ENCODE measurements at regions of chr4 and their contacts with region 1.

Region 1: DNA sequence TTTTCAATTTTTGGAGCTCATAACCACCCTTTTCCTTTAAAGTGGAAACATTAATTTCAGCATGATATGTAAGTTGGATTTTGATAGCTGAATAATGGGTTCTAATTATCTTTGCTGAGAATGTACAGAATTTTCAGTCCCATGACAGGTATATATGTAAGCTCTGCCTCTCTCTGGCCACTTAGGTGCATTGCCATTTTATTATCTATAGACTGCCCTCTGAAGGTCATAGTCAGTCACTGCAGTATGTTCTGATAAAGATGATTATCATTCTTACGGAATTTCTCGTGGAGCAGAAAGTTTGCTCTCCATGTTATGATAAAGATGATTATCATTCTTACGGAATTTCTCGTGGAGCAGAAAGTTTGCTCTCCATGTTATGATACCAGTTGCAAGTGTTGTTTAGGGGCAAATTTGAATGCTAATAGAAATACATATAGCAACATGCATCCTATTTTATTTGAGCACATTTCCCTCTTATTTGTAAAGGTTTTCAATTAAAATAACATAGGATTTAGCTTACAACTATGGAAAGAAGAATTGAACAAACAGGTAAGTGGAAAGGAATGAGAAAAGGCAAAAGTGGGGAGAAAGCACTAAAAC is 10.4 kb downstream of the AFP start:
- DNase-seq: peak; percentile 40
- H3K4me3 ChIP-seq: no peak overlapping the region
- H3K27ac ChIP-seq: no peak overlapping the region
- H3K4me1 ChIP-seq: no peaks in the 10 kb centered on the region
- H3K27me3 ChIP-seq: peaks cover 12 to 42% of the 10 kb centered on the region in 2 experiments
- CTCF ChIP-seq: peak; percentile 53 to 59
- POLR2A ChIP-seq: no peak

Region 2: GRCh38 chr4:73036123-73036522 is 410.3 kb before region 1 on chr4:
- CTCF ChIA-PET with region 1: interaction called, 14 read pairs
- POLR2A ChIA-PET with region 1: no interaction called
- dilution Hi-C with region 1: no loop called
- intact Hi-C with region 1: no loop called
- DNase-seq: no peak
- H3K4me3 ChIP-seq: no peak overlapping the region
- H3K27ac ChIP-seq: no peak overlapping the region
- H3K4me1 ChIP-seq: no peaks in the 10 kb centered on the region
- H3K27me3 ChIP-seq: peaks cover 0 to 3% of the 10 kb centered on the region in 2 experiments
- CTCF ChIP-seq: no peak
- POLR2A ChIP-seq: no peak

Region 3: GRCh38 chr4:73308286-73308685 is 138.2 kb before region 1 on chr4:
- CTCF ChIA-PET with region 1: interaction called, 18 read pairs
- POLR2A ChIA-PET with region 1: no interaction called
- dilution Hi-C with region 1: no loop called
- intact Hi-C with region 1: loop called (anchors 2 kb)
- DNase-seq: peak; percentile 20
- H3K4me3 ChIP-seq: no peak overlapping the region
- H3K27ac ChIP-seq: no peak overlapping the region
- H3K4me1 ChIP-seq: peaks cover 2% of the 10 kb centered on the region
- H3K27me3 ChIP-seq: peaks cover 0 to 2% of the 10 kb centered on the region in 2 experiments
- CTCF ChIP-seq: no peak
- POLR2A ChIP-seq: no peak

Region 4: DNA sequence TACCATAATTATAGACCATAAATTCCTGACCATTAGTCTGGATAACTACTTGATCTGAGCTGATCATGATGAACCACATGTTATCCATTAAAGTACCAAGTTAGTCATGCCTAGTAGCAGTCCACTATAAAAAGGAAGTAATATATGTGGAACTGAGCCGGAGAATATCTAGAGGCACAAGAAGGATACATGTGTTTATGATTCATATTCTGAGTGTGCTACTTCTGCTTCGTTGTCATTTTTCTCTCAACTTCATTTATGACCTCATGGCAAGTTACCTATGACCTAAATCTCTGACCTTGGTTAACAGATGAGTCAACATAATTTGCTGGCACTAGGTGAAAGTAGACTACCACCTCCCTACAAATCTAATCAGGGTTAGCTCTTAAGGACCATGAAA is 131.3 kb before region 1 on chr4:
- CTCF ChIA-PET with region 1: interaction called, 18 read pairs
- POLR2A ChIA-PET with region 1: no interaction called
- dilution Hi-C with region 1: no loop called
- intact Hi-C with region 1: loop called (anchors 2 kb)
- DNase-seq: no peak
- H3K4me3 ChIP-seq: no peak overlapping the region
- H3K27ac ChIP-seq: no peak overlapping the region
- H3K4me1 ChIP-seq: peaks cover 2% of the 10 kb centered on the region
- H3K27me3 ChIP-seq: peaks cover 0 to 4% of the 10 kb centered on the region in 2 experiments
- CTCF ChIP-seq: no peak
- POLR2A ChIP-seq: no peak

Region 5: DNA sequence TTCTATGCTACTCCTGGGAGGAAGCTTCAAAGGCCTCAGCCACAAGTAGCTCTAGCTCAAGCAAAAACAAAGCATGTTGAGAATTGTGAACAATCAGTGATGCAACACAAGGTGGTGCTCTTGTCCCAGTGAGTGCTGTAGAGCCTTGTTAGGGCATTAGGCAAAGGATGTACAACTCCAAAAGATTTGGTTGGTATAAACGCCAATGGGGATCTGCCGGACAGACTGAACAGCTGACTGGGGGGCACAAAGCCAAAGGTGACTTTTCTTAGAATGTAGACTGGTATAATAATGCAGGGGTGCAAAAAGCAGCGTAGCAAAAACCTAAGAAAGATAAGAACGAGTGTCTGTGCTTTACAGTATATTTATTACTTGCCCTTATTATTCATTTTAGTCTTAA is 105.0 kb before region 1 on chr4:
- CTCF ChIA-PET with region 1: interaction called, 18 read pairs
- POLR2A ChIA-PET with region 1: no interaction called
- dilution Hi-C with region 1: no loop called
- intact Hi-C with region 1: loop called (anchors 5 kb)
- DNase-seq: peak; percentile 34
- H3K4me3 ChIP-seq: no peak overlapping the region
- H3K27ac ChIP-seq: no peak overlapping the region
- H3K4me1 ChIP-seq: no peaks in the 10 kb centered on the region
- H3K27me3 ChIP-seq: peaks cover 0 to 3% of the 10 kb centered on the region in 2 experiments
- CTCF ChIP-seq: peak in 1 of 2 donors; percentile 29
- POLR2A ChIP-seq: no peak

Region 6: GRCh38 chr4:73434311-73434710 is 12.1 kb before region 1 on chr4:
- CTCF ChIA-PET with region 1: interaction called, 24 read pairs
- POLR2A ChIA-PET with region 1: no interaction called
- dilution Hi-C with region 1: no loop called
- intact Hi-C with region 1: no loop called
- DNase-seq: peak; percentile 25
- H3K4me3 ChIP-seq: no peak overlapping the region
- H3K27ac ChIP-seq: no peak overlapping the region
- H3K4me1 ChIP-seq: no peaks in the 10 kb centered on the region
- H3K27me3 ChIP-seq: peaks cover 0 to 16% of the 10 kb centered on the region in 2 experiments
- CTCF ChIP-seq: peak; percentile 13 to 37
- POLR2A ChIP-seq: no peak

Region 7: GRCh38 chr4:73653695-73654106 is 207.3 kb after region 1 on chr4:
- CTCF ChIA-PET with region 1: interaction called, 10 read pairs
- POLR2A ChIA-PET with region 1: no interaction called
- dilution Hi-C with region 1: no loop called
- intact Hi-C with region 1: no loop called
- DNase-seq: peak; percentile 91
- H3K4me3 ChIP-seq: no peak overlapping the region
- H3K27ac ChIP-seq: no peak overlapping the region
- H3K4me1 ChIP-seq: no peaks in the 10 kb centered on the region
- H3K27me3 ChIP-seq: no peaks in the 10 kb centered on the region
- CTCF ChIP-seq: peak; percentile 33 to 41
- POLR2A ChIP-seq: no peak